ENCODE measurements at regions of chr1 and their contacts with region 1.

Region 1: DNA sequence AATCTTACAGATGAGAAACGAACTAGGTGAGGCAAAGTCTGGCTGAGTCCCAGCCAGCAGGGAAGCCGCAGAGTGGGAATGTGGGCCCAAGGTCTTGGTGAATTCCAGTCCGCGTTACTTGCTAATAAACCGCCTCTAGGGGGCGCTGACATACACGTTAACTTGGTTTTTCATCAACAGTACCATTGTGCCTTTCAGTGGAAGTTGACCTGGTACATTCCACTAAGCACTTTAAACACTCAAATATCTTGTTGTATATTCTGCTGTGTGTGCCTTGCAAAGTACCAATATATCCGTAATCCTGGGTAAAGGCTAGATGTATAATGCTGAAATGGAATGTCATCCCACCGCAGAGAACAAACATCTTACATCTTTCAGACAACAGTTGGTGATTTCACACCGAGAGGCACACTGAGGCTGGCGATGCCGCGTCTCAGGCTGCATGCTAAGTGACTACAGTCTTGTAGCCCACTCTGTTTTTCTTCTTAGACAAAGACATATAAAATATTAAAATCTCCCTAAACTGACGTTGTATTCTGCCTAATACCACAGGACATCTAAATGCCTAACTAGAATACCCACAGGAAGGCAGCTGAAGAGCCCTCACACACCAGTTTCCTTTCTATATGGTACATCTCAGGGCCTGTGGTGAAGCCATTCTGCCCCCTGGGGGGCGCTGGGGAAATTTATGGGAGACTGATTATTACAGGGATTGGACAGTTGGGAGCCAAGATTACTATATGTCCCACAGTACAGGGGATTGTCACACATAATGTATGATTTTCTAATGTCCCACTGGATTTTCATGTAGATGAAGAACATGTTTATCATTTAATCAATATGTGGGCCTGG is 49.2 kb upstream of the C1orf198 start:
- DNase-seq: peak; percentile 77
- H3K4me3 Mint-ChIP-seq: no peak overlapping the region
- H3K27ac Mint-ChIP-seq: no peak overlapping the region
- H3K4me1 Mint-ChIP-seq: no peaks in the 10 kb centered on the region
- H3K27me3 Mint-ChIP-seq: no peaks in the 10 kb centered on the region

Region 2: DNA sequence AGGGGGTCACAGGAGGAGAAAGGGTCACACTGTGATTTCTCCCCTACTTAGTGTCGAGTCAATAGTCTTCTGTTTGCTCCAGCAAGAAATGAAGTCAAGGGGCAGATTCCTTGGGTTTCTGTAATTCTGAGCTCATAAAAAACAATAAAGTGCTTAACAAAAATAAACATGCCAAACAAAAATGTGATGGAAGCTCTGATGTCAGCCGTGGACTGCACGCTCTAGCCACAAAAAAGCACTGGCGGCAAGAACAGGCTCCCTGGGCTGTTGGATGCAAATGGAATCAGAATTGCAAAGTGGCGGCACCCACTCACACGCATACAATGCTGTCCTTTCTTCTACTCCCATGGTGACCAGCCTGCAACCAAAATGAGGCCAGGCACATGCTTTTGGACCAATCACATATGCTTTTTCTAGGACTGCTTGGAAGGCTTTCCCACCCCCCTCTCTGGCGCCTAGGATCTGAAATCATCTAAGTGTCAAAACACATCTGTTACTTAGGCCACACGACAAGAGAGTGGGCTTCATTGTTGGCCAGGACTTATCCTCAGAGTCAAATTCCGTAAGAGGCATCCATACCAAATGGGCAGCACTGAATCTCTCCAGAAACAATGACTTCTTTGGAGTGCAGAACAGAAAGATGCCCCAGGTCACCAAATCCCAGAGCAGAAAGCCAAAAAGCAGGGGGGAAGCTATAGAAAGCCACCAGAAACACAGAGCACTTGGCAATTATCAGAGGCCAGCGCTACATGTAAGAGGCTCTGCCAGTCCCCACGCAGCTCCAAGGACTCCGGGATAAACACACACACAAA is 58.4 kb before region 1 on chr1:
- CTCF ChIA-PET with region 1: no interaction called
- POLR2A ChIA-PET with region 1: no interaction called
- intact Hi-C with region 1: no loop called
- DNase-seq: no peak
- H3K4me3 Mint-ChIP-seq: no peak overlapping the region
- H3K27ac Mint-ChIP-seq: no peak overlapping the region
- H3K4me1 Mint-ChIP-seq: peaks cover 15% of the 10 kb centered on the region
- H3K27me3 Mint-ChIP-seq: no peaks in the 10 kb centered on the region

Region 3: GRCh38 chr1:231091831-231092301 is 174.4 kb after region 1 on chr1:
- CTCF ChIA-PET with region 1: interaction called, 23 read pairs
- POLR2A ChIA-PET with region 1: no interaction called
- intact Hi-C with region 1: loop called (anchors 1 kb)
- DNase-seq: peak; percentile 56
- H3K4me3 Mint-ChIP-seq: no peak overlapping the region
- H3K27ac Mint-ChIP-seq: no peak overlapping the region
- H3K4me1 Mint-ChIP-seq: no peaks in the 10 kb centered on the region
- H3K27me3 Mint-ChIP-seq: peaks cover 24% of the 10 kb centered on the region

Region 4: GRCh38 chr1:231211005-231211857 is 293.7 kb after region 1 on chr1:
- CTCF ChIA-PET with region 1: interaction called, 25 read pairs
- POLR2A ChIA-PET with region 1: no interaction called
- intact Hi-C with region 1: loop called (anchors 1 kb)
- DNase-seq: peak; percentile 96
- H3K4me3 Mint-ChIP-seq: peak overlapping the region; percentile 76
- H3K27ac Mint-ChIP-seq: peak overlapping the region; percentile 51
- H3K4me1 Mint-ChIP-seq: peaks cover 11% of the 10 kb centered on the region
- H3K27me3 Mint-ChIP-seq: no peaks in the 10 kb centered on the region